Transverse colon (tissue), 4 donors: ENCODE measurements at regions of chr5 and their contacts with region 1.

Region 1: GRCh38 chr5:175718401-175719108 is 60.7 kb downstream of the HRH2 start:
- DNase-seq: peak; percentile 59
- H3K4me3 ChIP-seq: no peak overlapping the region
- H3K27ac ChIP-seq: no peak overlapping the region
- H3K4me1 ChIP-seq: no peaks in the 10 kb centered on the region
- H3K27me3 ChIP-seq: no peaks in the 10 kb centered on the region
- CTCF ChIP-seq: peak; percentile 58 to 72 (median 66)
- EP300 ChIP-seq: no peak
- POLR2A ChIP-seq: no peak

Region 2: DNA sequence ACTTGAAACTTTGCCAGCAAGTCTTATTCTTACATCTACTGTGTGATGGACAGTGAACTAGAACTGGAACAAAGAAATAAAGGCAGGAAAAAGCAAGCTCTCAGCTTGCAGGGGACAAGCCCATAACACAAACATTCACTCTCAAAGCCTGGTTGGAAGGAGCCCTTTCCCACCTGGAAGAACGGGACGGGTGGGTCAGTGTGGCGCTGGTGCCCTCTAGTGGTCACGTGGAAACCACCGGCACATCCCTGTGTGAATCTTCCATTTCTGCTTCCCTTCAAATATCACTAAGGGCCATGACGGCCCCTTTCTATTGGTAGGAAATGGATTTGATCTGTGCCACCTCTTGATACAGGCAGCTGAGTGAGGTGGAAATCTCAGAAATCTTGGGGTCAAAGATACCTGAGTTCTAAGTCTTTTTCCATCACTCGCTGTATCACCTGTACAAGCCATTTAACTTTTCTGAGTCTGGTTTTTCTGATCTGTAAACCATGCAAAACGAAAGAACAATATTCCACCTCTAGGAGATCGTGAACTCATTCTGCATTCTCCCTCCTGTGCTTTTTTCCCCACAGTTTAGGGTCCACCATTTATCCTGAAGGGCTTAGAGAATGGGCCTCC is 782.6 kb before region 1 on chr5:
- in situ Hi-C with region 1: no loop called
- intact Hi-C with region 1: no loop called
- DNase-seq: peak; percentile 35
- H3K4me3 ChIP-seq: no peak overlapping the region
- H3K27ac ChIP-seq: no peak overlapping the region
- H3K4me1 ChIP-seq: no peaks in the 10 kb centered on the region
- H3K27me3 ChIP-seq: no peaks in the 10 kb centered on the region
- CTCF ChIP-seq: peak; percentile 63 to 86 (median 83)
- EP300 ChIP-seq: no peak
- POLR2A ChIP-seq: no peak

Region 3: GRCh38 chr5:175534070-175534932 is 184.3 kb before region 1 on chr5:
- in situ Hi-C with region 1: loop called (anchors 5 to 10 kb)
- intact Hi-C with region 1: no loop called
- DNase-seq: peak; percentile 77
- H3K4me3 ChIP-seq: no peak overlapping the region
- H3K27ac ChIP-seq: no peak overlapping the region
- H3K4me1 ChIP-seq: peaks cover 0 to 7% (median 0%) of the 10 kb centered on the region in 4 donors
- H3K27me3 ChIP-seq: no peaks in the 10 kb centered on the region
- CTCF ChIP-seq: peak; percentile 83 to 98 (median 94)
- EP300 ChIP-seq: no peak
- POLR2A ChIP-seq: no peak

Region 4: GRCh38 chr5:175729829-175730277 is 11.3 kb after region 1 on chr5:
- in situ Hi-C with region 1: no loop called
- intact Hi-C with region 1: no loop called
- DNase-seq: peak; percentile 91
- H3K4me3 ChIP-seq: no peak overlapping the region
- H3K27ac ChIP-seq: no peak overlapping the region
- H3K4me1 ChIP-seq: no peaks in the 10 kb centered on the region
- H3K27me3 ChIP-seq: peaks cover 35% of the 10 kb centered on the region
- CTCF ChIP-seq: peak; percentile 84 to 97 (median 91)
- EP300 ChIP-seq: no peak
- POLR2A ChIP-seq: no peak